Aorta (tissue), 5 donors: ENCODE measurements at regions of chr4 and their contacts with region 1.

Region 1: GRCh38 chr4:136793848-136794247 is 738.4 kb downstream of the PCDH18 start:
- DNase-seq: no peak
- ATAC-seq: no peak
- H3K4me3 ChIP-seq: no peak overlapping the region
- H3K27ac ChIP-seq: no peak overlapping the region
- H3K4me1 ChIP-seq: no peaks in the 10 kb centered on the region
- H3K27me3 ChIP-seq: no peaks in the 10 kb centered on the region

Region 2: GRCh38 chr4:135966936-135967335 is 826.9 kb before region 1 on chr4:
- intact Hi-C with region 1: loop called in 1 of 2 experiments (anchors 10 kb)
- DNase-seq: no peak
- ATAC-seq: no peak
- H3K4me3 ChIP-seq: no peak overlapping the region
- H3K27ac ChIP-seq: no peak overlapping the region
- H3K4me1 ChIP-seq: no peaks in the 10 kb centered on the region
- H3K27me3 ChIP-seq: no peaks in the 10 kb centered on the region